B cell (primary cell): ENCODE measurements at regions of chr14 and their contacts with region 1.

Region 1: GRCh38 chr14:93115069-93115820 is 480 bp downstream of the ITPK1 start:
- DNase-seq: peak; percentile 92
- ATAC-seq: peak; percentile 74
- H3K4me3 ChIP-seq: peak overlapping the region; percentile 37 to 89 (median 79)
- H3K4me3 Mint-ChIP-seq: peak overlapping the region; percentile 92
- H3K27ac ChIP-seq: peak overlapping the region; percentile 34 to 74
- H3K27ac Mint-ChIP-seq: peak overlapping the region; percentile 89
- H3K4me1 ChIP-seq: peaks cover 27 to 34% of the 10 kb centered on the region in 2 donors
- H3K4me1 Mint-ChIP-seq: peaks cover 32% of the 10 kb centered on the region
- H3K27me3 ChIP-seq: no peaks in the 10 kb centered on the region
- H3K27me3 Mint-ChIP-seq: no peaks in the 10 kb centered on the region
- CTCF ChIP-seq: peak; percentile 12

Region 2: GRCh38 chr14:93023039-93023438 is 92.2 kb before region 1 on chr14:
- CTCF ChIA-PET with region 1: no interaction called
- POLR2A ChIA-PET with region 1: no interaction called
- intact Hi-C with region 1: no loop called
- DNase-seq: no peak
- ATAC-seq: no peak
- H3K4me3 ChIP-seq: no peak overlapping the region
- H3K4me3 Mint-ChIP-seq: no peak overlapping the region
- H3K27ac ChIP-seq: no peak overlapping the region
- H3K27ac Mint-ChIP-seq: no peak overlapping the region
- H3K4me1 ChIP-seq: no peaks in the 10 kb centered on the region
- H3K4me1 Mint-ChIP-seq: peaks cover 4% of the 10 kb centered on the region
- H3K27me3 ChIP-seq: no peaks in the 10 kb centered on the region
- H3K27me3 Mint-ChIP-seq: no peaks in the 10 kb centered on the region
- CTCF ChIP-seq: no peak

Region 3: GRCh38 chr14:93033983-93034670 is 81.1 kb before region 1 on chr14:
- CTCF ChIA-PET with region 1: interaction called, 35 read pairs
- POLR2A ChIA-PET with region 1: interaction called, 4 read pairs
- intact Hi-C with region 1: loop called (anchors 2 kb)
- DNase-seq: peak; percentile 68
- ATAC-seq: peak; percentile 69
- H3K4me3 ChIP-seq: peak overlapping the region in 2 of 5 experiments; percentile 12 to 36
- H3K4me3 Mint-ChIP-seq: peak overlapping the region; percentile 76
- H3K27ac ChIP-seq: peak overlapping the region; percentile 61 to 84
- H3K27ac Mint-ChIP-seq: peak overlapping the region; percentile 90
- H3K4me1 ChIP-seq: peaks cover 34 to 64% of the 10 kb centered on the region in 2 donors
- H3K4me1 Mint-ChIP-seq: peaks cover 58% of the 10 kb centered on the region
- H3K27me3 ChIP-seq: no peaks in the 10 kb centered on the region
- H3K27me3 Mint-ChIP-seq: no peaks in the 10 kb centered on the region
- CTCF ChIP-seq: peak; percentile 68

Region 4: GRCh38 chr14:93103392-93104080 is 11.7 kb before region 1 on chr14:
- CTCF ChIA-PET with region 1: interaction called, 19 read pairs
- POLR2A ChIA-PET with region 1: no interaction called
- intact Hi-C with region 1: loop called (anchors 1 kb)
- DNase-seq: peak; percentile 66
- ATAC-seq: peak; percentile 95
- H3K4me3 ChIP-seq: peak overlapping the region in 4 of 5 experiments; percentile 26 to 47 (median 39)
- H3K4me3 Mint-ChIP-seq: peak overlapping the region; percentile 79
- H3K27ac ChIP-seq: peak overlapping the region; percentile 68 to 76
- H3K27ac Mint-ChIP-seq: peak overlapping the region; percentile 93
- H3K4me1 ChIP-seq: peaks cover 25 to 50% of the 10 kb centered on the region in 2 donors
- H3K4me1 Mint-ChIP-seq: peaks cover 45% of the 10 kb centered on the region
- H3K27me3 ChIP-seq: no peaks in the 10 kb centered on the region
- H3K27me3 Mint-ChIP-seq: no peaks in the 10 kb centered on the region
- CTCF ChIP-seq: no peak

Region 5: GRCh38 chr14:93173943-93174395 is 58.7 kb after region 1 on chr14:
- CTCF ChIA-PET with region 1: interaction called, 18 read pairs
- POLR2A ChIA-PET with region 1: no interaction called
- intact Hi-C with region 1: no loop called
- DNase-seq: no peak
- ATAC-seq: no peak
- H3K4me3 ChIP-seq: no peak overlapping the region
- H3K4me3 Mint-ChIP-seq: no peak overlapping the region
- H3K27ac ChIP-seq: no peak overlapping the region
- H3K27ac Mint-ChIP-seq: no peak overlapping the region
- H3K4me1 ChIP-seq: no peaks in the 10 kb centered on the region
- H3K4me1 Mint-ChIP-seq: no peaks in the 10 kb centered on the region
- H3K27me3 ChIP-seq: no peaks in the 10 kb centered on the region
- H3K27me3 Mint-ChIP-seq: no peaks in the 10 kb centered on the region
- CTCF ChIP-seq: no peak

Region 6: GRCh38 chr14:93219103-93219726 is 104.0 kb after region 1 on chr14:
- CTCF ChIA-PET with region 1: interaction called, 22 read pairs
- POLR2A ChIA-PET with region 1: interaction called, 5 read pairs
- intact Hi-C with region 1: loop called (anchors 1 kb)
- DNase-seq: peak; percentile 68
- ATAC-seq: peak; percentile 60
- H3K4me3 ChIP-seq: no peak overlapping the region
- H3K4me3 Mint-ChIP-seq: no peak overlapping the region
- H3K27ac ChIP-seq: no peak overlapping the region
- H3K27ac Mint-ChIP-seq: no peak overlapping the region
- H3K4me1 ChIP-seq: no peaks in the 10 kb centered on the region
- H3K4me1 Mint-ChIP-seq: no peaks in the 10 kb centered on the region
- H3K27me3 ChIP-seq: no peaks in the 10 kb centered on the region
- H3K27me3 Mint-ChIP-seq: no peaks in the 10 kb centered on the region
- CTCF ChIP-seq: peak; percentile 84

Region 7: DNA sequence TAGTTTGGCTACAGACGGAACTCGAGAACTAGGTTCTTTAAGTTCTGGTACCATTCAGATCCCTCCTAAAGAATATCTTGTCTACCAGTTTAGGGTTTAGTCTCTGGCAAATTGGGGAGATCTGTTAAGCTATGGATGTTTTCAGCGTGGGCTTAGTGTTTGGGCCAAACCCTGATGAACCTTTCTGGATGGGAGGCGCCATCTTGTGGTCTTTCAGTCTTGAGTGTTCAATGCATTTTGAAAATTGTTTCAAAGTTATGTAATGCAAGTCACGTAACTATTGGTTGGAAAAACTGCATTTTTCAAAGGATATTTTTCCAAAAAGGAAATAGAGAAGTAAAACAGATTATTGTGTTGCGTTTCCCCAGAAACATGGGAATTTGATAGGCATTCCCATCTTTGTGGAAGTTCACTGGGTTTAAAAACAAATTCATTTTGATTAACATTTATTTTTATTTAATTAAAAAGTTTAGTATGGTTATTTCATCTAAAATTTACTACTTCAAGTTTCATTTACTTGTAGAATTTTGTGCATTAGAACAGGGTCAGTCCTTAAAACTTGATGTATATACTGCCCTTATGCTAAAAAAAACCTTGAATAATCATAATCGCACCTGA is 504.0 kb after region 1 on chr14:
- CTCF ChIA-PET with region 1: interaction called, 16 read pairs
- POLR2A ChIA-PET with region 1: no interaction called
- intact Hi-C with region 1: no loop called
- DNase-seq: peak; percentile 49
- ATAC-seq: no peak
- H3K4me3 ChIP-seq: no peak overlapping the region
- H3K4me3 Mint-ChIP-seq: no peak overlapping the region
- H3K27ac ChIP-seq: no peak overlapping the region
- H3K27ac Mint-ChIP-seq: no peak overlapping the region
- H3K4me1 ChIP-seq: no peaks in the 10 kb centered on the region
- H3K4me1 Mint-ChIP-seq: no peaks in the 10 kb centered on the region
- H3K27me3 ChIP-seq: peaks cover 0 to 3% (median 0%) of the 10 kb centered on the region in 4 experiments
- H3K27me3 Mint-ChIP-seq: peaks cover 19% of the 10 kb centered on the region
- CTCF ChIP-seq: peak; percentile 73